Activated CD4-positive, alpha-beta T cell treated with anti-CD3 and anti-CD28 coated beads for 36 hours (primary cell): ENCODE measurements at regions of chr12 and their contacts with region 1.

Region 1: GRCh38 chr12:9244894-9245293 is 36.7 kb upstream of the PZP start:
- DNase-seq: peak; percentile 88
- ATAC-seq: peak; percentile 89
- H3K4me3 Mint-ChIP-seq: peak overlapping the region; percentile 46
- H3K27ac Mint-ChIP-seq: peak overlapping the region; percentile 89
- H3K4me1 Mint-ChIP-seq: peaks cover 50% of the 10 kb centered on the region
- H3K27me3 Mint-ChIP-seq: peaks cover 10% of the 10 kb centered on the region

Region 2: GRCh38 chr12:8697476-8698131 is 547.3 kb before region 1 on chr12 and contains the start of gene RIMKLB:
- CTCF ChIA-PET with region 1: no interaction called
- POLR2A ChIA-PET with region 1: interaction called, 11 read pairs
- intact Hi-C with region 1: no loop called
- DNase-seq: peak; percentile 82
- ATAC-seq: peak; percentile 93
- H3K4me3 Mint-ChIP-seq: peak within 1 kb of the TSS; percentile 86
- H3K27ac Mint-ChIP-seq: peak within 1 kb of the TSS; percentile 85
- H3K4me1 Mint-ChIP-seq: peaks cover 18% of the 10 kb centered on the region
- H3K27me3 Mint-ChIP-seq: peaks cover 2% of the 10 kb centered on the region
- total RNA-seq, gene RIMKLB: 5.2 to 5.3 TPM

Region 3: DNA sequence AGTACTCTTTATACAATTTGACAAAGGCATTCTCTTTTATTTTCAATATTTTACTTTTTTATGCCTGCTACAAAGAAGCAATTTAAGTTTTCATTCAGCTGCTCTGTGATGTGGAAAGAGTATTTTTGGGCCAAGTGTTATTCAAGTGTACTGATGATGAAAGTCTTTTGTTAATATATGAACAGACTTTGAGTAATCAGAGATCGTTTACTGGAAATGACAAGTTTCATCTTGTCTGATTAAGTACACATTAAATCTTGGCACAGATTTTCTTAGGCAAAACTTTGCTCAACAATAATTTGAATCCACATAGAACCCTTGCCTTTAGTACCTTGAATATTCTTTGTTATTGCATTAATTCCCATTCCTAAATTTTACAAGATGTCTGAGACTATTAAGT is 23.4 kb before region 1 on chr12:
- CTCF ChIA-PET with region 1: no interaction called
- POLR2A ChIA-PET with region 1: no interaction called
- intact Hi-C with region 1: no loop called
- DNase-seq: no peak
- ATAC-seq: no peak
- H3K4me3 Mint-ChIP-seq: no peak overlapping the region
- H3K27ac Mint-ChIP-seq: no peak overlapping the region
- H3K4me1 Mint-ChIP-seq: no peaks in the 10 kb centered on the region
- H3K27me3 Mint-ChIP-seq: peaks cover 3% of the 10 kb centered on the region

Region 4: DNA sequence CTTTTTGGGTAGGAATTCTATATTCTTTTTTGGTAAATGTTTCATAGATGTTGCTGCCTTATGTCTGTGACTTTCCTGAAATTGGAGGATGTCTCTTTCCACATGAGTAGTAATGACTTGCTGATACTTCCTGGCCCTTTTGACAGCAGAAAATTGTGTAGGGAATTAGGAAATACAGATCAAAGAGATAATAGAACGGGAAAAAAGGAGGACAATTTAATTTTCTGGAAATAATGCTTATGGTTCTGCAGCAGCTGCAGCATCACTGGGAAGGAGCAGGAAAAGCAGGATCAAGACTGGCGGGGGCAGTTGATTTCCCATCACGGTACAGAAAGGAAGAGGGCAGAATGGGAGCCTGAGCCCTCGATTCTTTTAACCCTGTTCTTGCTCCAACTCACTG is 32.1 kb after region 1 on chr12:
- CTCF ChIA-PET with region 1: no interaction called
- POLR2A ChIA-PET with region 1: interaction called, 4 read pairs
- intact Hi-C with region 1: loop called in 1 of 2 experiments (anchors 1 kb)
- DNase-seq: no peak
- ATAC-seq: no peak
- H3K4me3 Mint-ChIP-seq: no peak overlapping the region
- H3K27ac Mint-ChIP-seq: no peak overlapping the region
- H3K4me1 Mint-ChIP-seq: peaks cover under 1% of the 10 kb centered on the region
- H3K27me3 Mint-ChIP-seq: peaks cover 11% of the 10 kb centered on the region

Region 5: DNA sequence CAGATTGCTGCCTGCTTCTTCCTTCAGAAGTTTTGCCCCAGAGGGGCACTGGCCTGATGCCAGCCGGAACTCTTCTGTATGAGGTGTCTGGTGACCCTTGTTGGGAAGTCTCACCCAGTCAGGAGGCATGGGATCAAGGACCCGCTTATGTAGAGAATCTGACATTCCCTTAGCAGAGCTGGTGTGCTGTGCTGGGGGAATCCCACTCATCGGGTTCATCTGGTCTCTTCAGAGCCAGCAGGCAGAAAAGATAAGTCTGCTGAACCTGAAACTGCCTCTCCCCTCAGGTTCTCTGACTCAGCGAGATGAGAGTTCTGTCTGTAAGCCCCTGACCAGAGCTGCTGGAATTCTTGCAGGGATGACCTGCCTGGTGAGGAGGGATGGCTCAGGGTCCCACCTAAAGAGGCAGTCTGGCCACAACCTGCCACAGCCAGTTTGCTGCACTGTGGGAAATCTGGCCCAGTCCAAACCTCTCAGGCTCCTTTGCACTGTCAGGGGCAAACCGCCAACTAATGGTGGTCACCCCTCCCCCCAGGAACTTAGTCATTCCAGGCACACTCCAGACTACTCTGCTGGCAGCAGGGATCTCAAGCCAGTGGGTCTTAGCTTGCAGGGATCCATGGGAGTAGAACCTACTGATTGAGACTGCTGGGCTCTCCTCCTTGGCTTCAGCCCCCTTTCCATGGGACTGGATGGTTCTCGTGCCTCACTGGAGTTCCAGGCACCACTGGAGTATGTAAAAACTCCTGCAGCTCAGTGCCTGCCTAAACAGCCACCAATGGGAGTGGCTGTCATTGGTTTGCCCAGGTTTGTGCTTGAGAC is 428.7 kb after region 1 on chr12:
- CTCF ChIA-PET with region 1: no interaction called
- POLR2A ChIA-PET with region 1: no interaction called
- intact Hi-C with region 1: loop called in 1 of 2 experiments (anchors 2 kb)
- DNase-seq: peak; percentile 89
- ATAC-seq: peak; percentile 47
- H3K4me3 Mint-ChIP-seq: peak overlapping the region; percentile 93
- H3K27ac Mint-ChIP-seq: peak overlapping the region; percentile 99
- H3K4me1 Mint-ChIP-seq: peaks cover 47% of the 10 kb centered on the region
- H3K27me3 Mint-ChIP-seq: no peaks in the 10 kb centered on the region

Region 6: DNA sequence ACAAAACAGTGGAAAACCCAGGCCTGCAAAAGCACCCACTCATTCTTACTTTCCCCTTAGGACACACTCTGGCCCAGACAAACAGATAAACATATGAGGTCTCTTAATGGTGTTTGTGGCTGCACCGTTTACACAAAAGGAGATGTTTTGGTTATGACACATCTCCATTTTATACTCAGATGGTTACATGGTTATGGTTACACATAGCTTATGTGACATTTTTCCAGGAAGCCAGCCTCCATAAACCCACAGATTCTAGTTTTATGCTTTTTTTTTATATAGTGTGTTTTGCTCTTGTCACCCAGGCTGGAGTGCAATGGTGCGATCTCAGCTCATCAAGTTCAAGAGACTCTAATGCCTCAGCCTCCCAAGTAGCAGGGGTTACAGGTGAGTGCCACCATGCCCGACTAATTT is 1059.3 kb after region 1 on chr12:
- CTCF ChIA-PET with region 1: no interaction called
- POLR2A ChIA-PET with region 1: no interaction called
- intact Hi-C with region 1: loop called in 1 of 2 experiments (anchors 10 kb)
- DNase-seq: peak; percentile 64
- ATAC-seq: peak; percentile 86
- H3K4me3 Mint-ChIP-seq: no peak overlapping the region
- H3K27ac Mint-ChIP-seq: peak overlapping the region; percentile 19
- H3K4me1 Mint-ChIP-seq: peaks cover 47% of the 10 kb centered on the region
- H3K27me3 Mint-ChIP-seq: peaks cover 21% of the 10 kb centered on the region